Ascending aorta (tissue), 2 donors: ENCODE measurements at regions of chr2 and their contacts with region 1.

Region 1: DNA sequence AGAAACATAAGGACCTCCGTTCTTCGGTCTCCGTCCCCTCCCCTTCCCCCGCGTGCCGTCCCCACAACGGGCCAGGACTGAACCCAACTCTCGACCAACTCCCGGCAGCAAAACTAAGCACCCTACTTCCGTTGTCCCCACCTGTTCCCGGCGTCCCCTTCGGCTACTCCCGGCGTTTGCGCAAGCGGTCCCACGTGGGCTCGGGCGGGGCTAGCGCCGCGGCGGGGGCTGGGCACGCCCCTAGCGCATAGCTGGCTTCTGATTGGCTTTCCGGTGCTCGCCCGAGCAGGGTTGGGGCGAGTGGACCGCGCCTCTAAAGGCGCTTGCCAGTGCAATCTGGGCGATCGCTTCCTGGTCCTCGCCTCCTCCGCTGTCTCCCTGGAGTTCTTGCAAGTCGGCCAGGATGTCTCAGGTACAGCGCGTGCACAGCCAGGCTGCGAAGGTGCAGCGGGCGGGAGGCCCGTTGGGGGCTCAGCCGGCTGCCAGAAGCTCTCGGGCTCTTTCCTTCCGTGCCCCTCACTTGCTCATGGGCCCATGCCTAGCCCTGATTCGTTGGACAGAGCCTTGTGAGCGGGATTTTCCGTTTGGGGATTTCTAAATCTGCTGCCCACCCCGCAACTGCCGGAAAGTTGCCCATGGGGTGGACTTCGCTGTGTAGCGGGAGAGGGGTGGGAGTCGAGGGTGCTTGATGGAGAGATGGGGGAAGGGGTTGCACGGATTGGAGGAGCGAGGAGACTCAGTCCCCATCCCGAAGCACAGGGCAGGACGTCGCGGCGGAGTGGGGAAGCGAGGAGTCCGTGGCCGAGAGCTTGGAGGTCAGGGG is at the starts of genes C2orf76 and DBI:
- DNase-seq: peak; percentile 82 to 97
- H3K4me3 ChIP-seq: peak within 1 kb of the TSS; percentile 75 to 80
- H3K27ac ChIP-seq: peak within 1 kb of the TSS; percentile 80 to 84
- H3K4me1 ChIP-seq: peaks cover 5 to 18% of the 10 kb centered on the region in 2 donors
- H3K27me3 ChIP-seq: no peaks in the 10 kb centered on the region
- CTCF ChIP-seq: no peak
- total RNA-seq, gene C2orf76: not detected
- total RNA-seq, gene DBI: 11.2 TPM

Region 2: DNA sequence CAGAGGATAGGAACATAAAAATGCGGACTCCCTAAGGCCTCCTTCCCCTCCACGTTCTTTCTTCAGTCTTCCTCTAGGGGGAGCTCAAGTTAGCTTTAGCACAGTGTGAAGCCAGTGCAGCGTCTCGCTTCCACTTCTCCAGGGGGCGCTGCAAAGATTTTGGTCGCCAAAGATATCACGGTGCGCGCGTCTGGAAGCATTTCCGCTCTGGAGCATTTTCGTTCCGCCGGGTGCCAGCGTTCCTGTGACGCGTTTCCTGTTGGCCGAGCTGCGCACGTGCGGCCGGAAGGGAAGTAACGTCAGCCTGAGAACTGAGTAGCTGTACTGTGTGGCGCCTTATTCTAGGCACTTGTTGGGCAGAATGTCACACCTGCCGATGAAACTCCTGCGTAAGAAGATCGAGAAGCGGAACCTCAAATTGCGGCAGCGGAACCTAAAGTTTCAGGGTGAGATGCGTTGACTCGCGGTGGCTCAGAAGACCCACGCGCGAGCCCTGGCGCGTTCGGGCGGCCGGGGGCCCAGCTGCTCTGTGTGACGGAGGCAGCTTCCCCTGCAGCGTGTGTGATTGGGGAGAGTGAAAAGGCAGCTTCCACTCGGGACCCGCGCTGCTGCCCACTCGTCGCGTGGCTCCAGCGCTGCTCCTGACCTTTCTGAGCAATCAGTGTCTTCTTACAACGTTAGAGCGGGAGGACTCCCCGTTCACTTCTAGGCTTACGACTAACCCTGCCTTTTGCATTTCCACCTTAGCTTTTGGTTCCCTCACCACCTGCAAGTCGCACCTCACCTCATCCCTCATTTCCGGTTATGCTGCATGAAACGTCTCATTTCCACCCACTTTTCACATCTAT is 1552.2 kb before region 1 on chr2 and contains the start of gene DDX18:
- intact Hi-C with region 1: loop called (anchors 2 kb)
- DNase-seq: peak; percentile 88 to 99
- H3K4me3 ChIP-seq: peak within 1 kb of the TSS; percentile 82 to 97
- H3K27ac ChIP-seq: peak within 1 kb of the TSS; percentile 93 to 94
- H3K4me1 ChIP-seq: peaks cover 4 to 18% of the 10 kb centered on the region in 2 donors
- H3K27me3 ChIP-seq: no peaks in the 10 kb centered on the region
- CTCF ChIP-seq: peak; percentile 91 to 99 (median 98)
- total RNA-seq, gene DDX18: 20.5 TPM

Region 3: GRCh38 chr2:119223521-119224390 is 143.1 kb before region 1 on chr2 and contains the start of gene STEAP3:
- intact Hi-C with region 1: loop called (anchors 5 kb)
- DNase-seq: peak; percentile 22 to 88
- H3K4me3 ChIP-seq: peak within 1 kb of the TSS; percentile 89 to 98
- H3K27ac ChIP-seq: peak within 1 kb of the TSS; percentile 31 to 53
- H3K4me1 ChIP-seq: peaks cover 0 to 18% of the 10 kb centered on the region in 2 donors
- H3K27me3 ChIP-seq: no peaks in the 10 kb centered on the region
- CTCF ChIP-seq: no peak
- total RNA-seq, gene STEAP3: 34.5 TPM

Region 4: GRCh38 chr2:119402645-119403560 is 36.0 kb after region 1 on chr2:
- intact Hi-C with region 1: no loop called
- DNase-seq: no peak
- H3K4me3 ChIP-seq: no peak overlapping the region
- H3K27ac ChIP-seq: no peak overlapping the region
- H3K4me1 ChIP-seq: no peaks in the 10 kb centered on the region
- H3K27me3 ChIP-seq: no peaks in the 10 kb centered on the region
- CTCF ChIP-seq: no peak

Region 5: GRCh38 chr2:119487434-119488244 is 120.8 kb after region 1 on chr2:
- intact Hi-C with region 1: loop called (anchors 2 kb)
- DNase-seq: peak in 1 of 2 donors; percentile 37
- H3K4me3 ChIP-seq: no peak overlapping the region
- H3K27ac ChIP-seq: peak overlapping the region in 1 of 2 donors; percentile 66
- H3K4me1 ChIP-seq: peaks cover 35 to 38% of the 10 kb centered on the region in 2 donors
- H3K27me3 ChIP-seq: no peaks in the 10 kb centered on the region
- CTCF ChIP-seq: no peak

Region 6: DNA sequence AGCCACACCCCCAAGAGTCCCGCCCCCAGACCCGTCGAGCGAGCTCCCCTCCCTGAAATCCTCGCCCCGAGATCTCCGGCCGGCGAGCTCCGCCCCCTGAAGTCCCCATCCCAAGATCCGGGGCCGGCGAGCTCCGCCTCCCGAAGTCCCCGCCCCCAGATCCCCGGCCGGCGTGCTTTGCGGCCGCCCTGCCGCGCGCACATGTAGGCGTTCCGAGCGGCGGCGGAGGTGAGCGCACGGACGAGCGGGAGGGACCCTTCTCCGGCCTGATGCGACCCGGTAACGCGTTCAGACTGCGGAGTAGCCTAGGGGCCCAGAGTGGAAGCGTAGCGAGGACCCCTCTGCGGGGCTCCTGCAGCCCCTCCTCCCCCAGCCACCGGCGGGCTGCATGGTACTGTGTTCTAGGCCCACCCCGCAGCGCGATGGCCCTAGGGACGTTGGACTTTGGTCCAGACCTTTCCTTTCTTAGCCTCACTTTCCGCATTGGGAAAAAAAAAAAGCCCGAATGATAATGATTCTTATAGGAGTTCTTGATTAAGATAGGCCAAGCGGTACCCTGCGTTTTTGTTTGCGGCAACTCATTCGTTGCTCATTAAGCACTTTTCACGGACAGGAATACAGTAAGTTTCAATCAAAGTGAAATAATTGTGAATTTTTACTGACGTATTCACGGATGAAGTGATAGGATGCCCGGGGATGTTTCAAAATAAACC is 312.3 kb after region 1 on chr2 and contains the start of gene TMEM177:
- intact Hi-C with region 1: loop called (anchors 5 kb)
- DNase-seq: peak; percentile 23 to 89
- H3K4me3 ChIP-seq: peak within 1 kb of the TSS; percentile 74 to 97
- H3K27ac ChIP-seq: peak within 1 kb of the TSS in 1 of 2 donors; percentile 54
- H3K4me1 ChIP-seq: peaks cover 4 to 7% of the 10 kb centered on the region in 2 donors
- H3K27me3 ChIP-seq: no peaks in the 10 kb centered on the region
- CTCF ChIP-seq: no peak
- total RNA-seq, gene TMEM177: not detected

Region 7: GRCh38 chr2:120012771-120013596 is 646.1 kb after region 1 on chr2 and contains the start of gene EPB41L5:
- intact Hi-C with region 1: loop called (anchors 2 kb)
- DNase-seq: peak; percentile 41 to 93
- H3K4me3 ChIP-seq: peak within 1 kb of the TSS; percentile 79 to 97
- H3K27ac ChIP-seq: peak within 1 kb of the TSS; percentile 88 to 91
- H3K4me1 ChIP-seq: no peaks in the 10 kb centered on the region
- H3K27me3 ChIP-seq: no peaks in the 10 kb centered on the region
- CTCF ChIP-seq: no peak
- total RNA-seq, gene EPB41L5: 11.7 TPM

Region 8: GRCh38 chr2:120252225-120253021 is 885.6 kb after region 1 on chr2 and contains the start of gene RALB:
- intact Hi-C with region 1: loop called (anchors 5 kb)
- DNase-seq: peak; percentile 98 to 100
- H3K4me3 ChIP-seq: peak within 1 kb of the TSS; percentile 83 to 85
- H3K27ac ChIP-seq: peak within 1 kb of the TSS; percentile 65 to 88
- H3K4me1 ChIP-seq: peaks cover 0 to under 1% of the 10 kb centered on the region in 2 donors
- H3K27me3 ChIP-seq: no peaks in the 10 kb centered on the region
- CTCF ChIP-seq: no peak
- total RNA-seq, gene RALB: 21.7 TPM